Activated CD4-positive, alpha-beta T cell treated with anti-CD3 and anti-CD28 coated beads for 36 hours (primary cell): ENCODE measurements at regions of chr7 and their contacts with region 1.

Region 1: GRCh38 chr7:22660732-22661131 is 66.3 kb upstream of the IL6 start:
- DNase-seq: no peak
- ATAC-seq: no peak
- H3K4me3 Mint-ChIP-seq: no peak overlapping the region
- H3K27ac Mint-ChIP-seq: no peak overlapping the region
- H3K4me1 Mint-ChIP-seq: peaks cover 33% of the 10 kb centered on the region
- H3K27me3 Mint-ChIP-seq: peaks cover 20% of the 10 kb centered on the region

Region 2: GRCh38 chr7:20862554-20862953 is 1798.2 kb before region 1 on chr7:
- CTCF ChIA-PET with region 1: no interaction called
- POLR2A ChIA-PET with region 1: no interaction called
- intact Hi-C with region 1: no loop called
- DNase-seq: no peak
- ATAC-seq: no peak
- H3K4me3 Mint-ChIP-seq: no peak overlapping the region
- H3K27ac Mint-ChIP-seq: no peak overlapping the region
- H3K4me1 Mint-ChIP-seq: no peaks in the 10 kb centered on the region
- H3K27me3 Mint-ChIP-seq: no peaks in the 10 kb centered on the region

Region 3: GRCh38 chr7:22137466-22137865 is 523.3 kb before region 1 on chr7:
- CTCF ChIA-PET with region 1: no interaction called
- POLR2A ChIA-PET with region 1: no interaction called
- intact Hi-C with region 1: no loop called
- DNase-seq: no peak
- ATAC-seq: no peak
- H3K4me3 Mint-ChIP-seq: no peak overlapping the region
- H3K27ac Mint-ChIP-seq: no peak overlapping the region
- H3K4me1 Mint-ChIP-seq: no peaks in the 10 kb centered on the region
- H3K27me3 Mint-ChIP-seq: peaks cover 6% of the 10 kb centered on the region

Region 4: GRCh38 chr7:22559829-22560489 is 100.8 kb before region 1 on chr7:
- CTCF ChIA-PET with region 1: interaction called, 11 read pairs
- POLR2A ChIA-PET with region 1: no interaction called
- intact Hi-C with region 1: loop called (anchors 2 kb)
- DNase-seq: peak; percentile 82
- ATAC-seq: peak; percentile 65
- H3K4me3 Mint-ChIP-seq: no peak overlapping the region
- H3K27ac Mint-ChIP-seq: no peak overlapping the region
- H3K4me1 Mint-ChIP-seq: peaks cover 37% of the 10 kb centered on the region
- H3K27me3 Mint-ChIP-seq: peaks cover 16% of the 10 kb centered on the region

Region 5: DNA sequence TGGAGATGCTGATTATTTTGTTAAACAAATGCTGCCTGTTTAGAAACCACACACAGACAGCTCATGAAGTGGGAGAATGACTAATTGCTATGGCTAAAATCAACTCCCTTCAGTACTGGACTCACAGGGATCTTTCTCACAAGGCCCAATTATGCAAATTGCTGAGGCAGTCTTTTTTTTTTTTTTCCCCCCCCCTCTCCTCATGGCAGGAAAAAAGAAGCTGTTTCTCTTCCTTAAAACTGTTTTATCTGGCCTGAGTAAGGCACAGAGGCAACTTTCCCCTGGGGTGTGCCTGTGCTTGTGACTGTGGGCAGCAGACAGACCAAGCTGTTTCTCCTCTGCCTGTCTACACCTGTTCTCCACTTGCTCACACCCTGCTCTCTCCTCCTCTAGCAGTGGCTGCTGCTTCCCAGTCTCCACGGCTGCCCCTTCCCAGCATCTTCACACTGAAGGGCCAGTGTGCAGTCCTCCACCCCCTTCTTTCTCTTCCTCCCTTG is 95.4 kb before region 1 on chr7:
- CTCF ChIA-PET with region 1: interaction called, 11 read pairs
- POLR2A ChIA-PET with region 1: no interaction called
- intact Hi-C with region 1: loop called (anchors 2 kb)
- DNase-seq: no peak
- ATAC-seq: no peak
- H3K4me3 Mint-ChIP-seq: no peak overlapping the region
- H3K27ac Mint-ChIP-seq: no peak overlapping the region
- H3K4me1 Mint-ChIP-seq: peaks cover 49% of the 10 kb centered on the region
- H3K27me3 Mint-ChIP-seq: peaks cover 54% of the 10 kb centered on the region

Region 6: GRCh38 chr7:22586786-22587140 is 74.0 kb before region 1 on chr7:
- CTCF ChIA-PET with region 1: no interaction called
- POLR2A ChIA-PET with region 1: no interaction called
- intact Hi-C with region 1: loop called in 1 of 2 experiments (anchors 2 kb)
- DNase-seq: no peak
- ATAC-seq: peak; percentile 42
- H3K4me3 Mint-ChIP-seq: no peak overlapping the region
- H3K27ac Mint-ChIP-seq: no peak overlapping the region
- H3K4me1 Mint-ChIP-seq: peaks cover 15% of the 10 kb centered on the region
- H3K27me3 Mint-ChIP-seq: peaks cover 26% of the 10 kb centered on the region

Region 7: GRCh38 chr7:22640269-22640668 is 20.5 kb before region 1 on chr7:
- CTCF ChIA-PET with region 1: interaction called, 3 read pairs
- POLR2A ChIA-PET with region 1: no interaction called
- intact Hi-C with region 1: loop called (anchors 1 kb)
- DNase-seq: peak; percentile 69
- ATAC-seq: peak; percentile 97
- H3K4me3 Mint-ChIP-seq: no peak overlapping the region
- H3K27ac Mint-ChIP-seq: no peak overlapping the region
- H3K4me1 Mint-ChIP-seq: peaks cover 22% of the 10 kb centered on the region
- H3K27me3 Mint-ChIP-seq: peaks cover 31% of the 10 kb centered on the region

Region 8: GRCh38 chr7:22697876-22698606 is 37.3 kb after region 1 on chr7:
- CTCF ChIA-PET with region 1: interaction called, 5 read pairs
- POLR2A ChIA-PET with region 1: interaction called, 5 read pairs
- intact Hi-C with region 1: loop called (anchors 1 kb)
- DNase-seq: peak; percentile 42
- ATAC-seq: peak; percentile 72
- H3K4me3 Mint-ChIP-seq: no peak overlapping the region
- H3K27ac Mint-ChIP-seq: peak overlapping the region; percentile 86
- H3K4me1 Mint-ChIP-seq: peaks cover 63% of the 10 kb centered on the region
- H3K27me3 Mint-ChIP-seq: peaks cover 3% of the 10 kb centered on the region

Region 9: DNA sequence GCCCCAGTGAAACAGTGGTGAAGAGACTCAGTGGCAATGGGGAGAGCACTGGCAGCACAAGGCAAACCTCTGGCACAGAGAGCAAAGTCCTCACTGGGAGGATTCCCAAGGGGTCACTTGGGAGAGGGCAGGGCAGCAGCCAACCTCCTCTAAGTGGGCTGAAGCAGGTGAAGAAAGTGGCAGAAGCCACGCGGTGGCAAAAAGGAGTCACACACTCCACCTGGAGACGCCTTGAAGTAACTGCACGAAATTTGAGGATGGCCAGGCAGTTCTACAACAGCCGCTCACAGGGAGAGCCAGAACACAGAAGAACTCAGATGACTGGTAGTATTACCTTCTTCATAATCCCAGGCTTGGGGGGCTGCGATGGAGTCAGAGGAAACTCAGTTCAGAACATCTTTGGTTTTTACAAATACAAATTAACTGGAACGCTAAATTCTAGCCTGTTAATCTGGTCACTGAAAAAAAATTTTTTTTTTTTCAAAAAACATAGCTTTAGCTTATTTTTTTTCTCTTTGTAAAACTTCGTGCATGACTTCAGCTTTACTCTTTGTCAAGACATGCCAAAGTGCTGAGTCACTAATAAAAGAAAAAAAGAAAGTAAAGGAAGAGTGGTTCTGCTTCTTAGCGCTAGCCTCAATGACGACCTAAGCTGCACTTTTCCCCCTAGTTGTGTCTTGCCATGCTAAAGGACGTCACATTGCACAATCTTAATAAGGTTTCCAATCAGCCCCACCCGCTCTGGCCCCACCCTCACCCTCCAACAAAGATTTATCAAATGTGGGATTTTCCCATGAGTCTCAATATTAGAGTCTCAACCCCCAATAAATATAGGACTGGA is 65.8 kb after region 1 on chr7:
- CTCF ChIA-PET with region 1: interaction called, 29 read pairs
- POLR2A ChIA-PET with region 1: no interaction called
- intact Hi-C with region 1: loop called (anchors 2 to 5 kb)
- DNase-seq: peak; percentile 79
- ATAC-seq: peak; percentile 92
- H3K4me3 Mint-ChIP-seq: peak overlapping the region; percentile 51
- H3K27ac Mint-ChIP-seq: peak overlapping the region; percentile 61
- H3K4me1 Mint-ChIP-seq: peaks cover 28% of the 10 kb centered on the region
- H3K27me3 Mint-ChIP-seq: peaks cover 31% of the 10 kb centered on the region